A673 (cell line): ENCODE measurements at regions of chr12 and their contacts with region 1.

Region 1: GRCh38 chr12:20624718-20625117 is 70.4 kb upstream of the SLCO1C1 start:
- DNase-seq: peak; percentile 29
- H3K4me3 ChIP-seq: no peak overlapping the region
- H3K27ac ChIP-seq: no peak overlapping the region
- H3K4me1 ChIP-seq: no peaks in the 10 kb centered on the region
- H3K27me3 ChIP-seq: peaks cover 7% of the 10 kb centered on the region
- CTCF ChIP-seq: peak; percentile 53

Region 2: GRCh38 chr12:20489645-20490044 is 135.1 kb before region 1 on chr12:
- CTCF ChIA-PET with region 1: no interaction called
- POLR2A ChIA-PET with region 1: no interaction called
- intact Hi-C with region 1: loop called (anchors 5 kb)
- DNase-seq: no peak
- H3K4me3 ChIP-seq: no peak overlapping the region
- H3K27ac ChIP-seq: no peak overlapping the region
- H3K4me1 ChIP-seq: no peaks in the 10 kb centered on the region
- H3K27me3 ChIP-seq: no peaks in the 10 kb centered on the region
- CTCF ChIP-seq: no peak

Region 3: GRCh38 chr12:20716037-20716436 is 91.3 kb after region 1 on chr12:
- CTCF ChIA-PET with region 1: no interaction called
- POLR2A ChIA-PET with region 1: no interaction called
- intact Hi-C with region 1: no loop called
- DNase-seq: no peak
- H3K4me3 ChIP-seq: no peak overlapping the region
- H3K27ac ChIP-seq: no peak overlapping the region
- H3K4me1 ChIP-seq: no peaks in the 10 kb centered on the region
- H3K27me3 ChIP-seq: no peaks in the 10 kb centered on the region
- CTCF ChIP-seq: no peak